SK-N-SH (cell line): ENCODE measurements at regions of chr7 and their contacts with region 1.

Region 1: DNA sequence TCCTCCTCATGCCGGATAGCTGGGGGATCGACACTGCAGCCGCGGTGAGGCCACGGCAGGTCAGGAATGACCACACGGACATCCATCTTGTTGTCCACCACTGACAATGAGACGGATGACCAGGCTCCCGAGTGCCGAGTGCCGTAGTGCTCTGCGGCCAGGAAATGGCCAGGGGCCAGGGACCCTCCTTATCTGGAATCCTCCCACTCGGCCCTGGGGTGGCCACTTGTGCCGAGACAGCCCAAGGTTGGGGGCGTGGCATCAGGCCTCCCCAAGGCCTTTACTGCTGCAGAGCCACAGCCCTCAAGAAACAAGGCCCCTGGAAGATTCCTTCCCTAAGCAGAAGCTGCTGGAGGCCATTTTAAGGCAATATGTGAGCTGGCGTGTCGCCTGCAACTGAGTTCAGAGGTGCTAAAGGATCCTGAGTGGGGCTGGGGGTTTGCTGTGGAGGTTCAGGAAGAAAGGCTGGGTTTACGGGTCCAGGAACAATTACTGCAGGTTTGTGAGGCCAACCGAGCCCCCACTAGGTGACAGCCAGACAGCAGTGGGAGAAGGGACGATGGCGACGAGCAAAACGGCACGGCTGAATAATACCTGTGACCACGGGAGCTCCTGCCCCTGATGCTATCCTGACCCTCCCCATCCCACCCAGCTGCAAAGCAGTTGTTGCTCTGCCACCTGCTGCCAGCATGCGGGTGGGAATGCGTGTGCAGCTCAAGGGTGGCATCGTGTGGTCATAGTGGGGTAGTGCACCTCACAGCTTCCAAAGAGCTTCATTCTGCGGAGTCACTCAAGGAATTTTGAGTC is 31.6 kb upstream of the LEP start:
- DNase-seq: peak; percentile 93
- H3K4me3 ChIP-seq: no peak overlapping the region
- H3K27ac ChIP-seq: no peak overlapping the region
- H3K4me1 ChIP-seq: peaks cover 0 to 3% of the 10 kb centered on the region in 2 experiments; a peak in 1 of 4 replicates
- H3K27me3 ChIP-seq: no peaks in the 10 kb centered on the region
- CTCF ChIP-seq: peak; percentile 99
- EP300 ChIP-seq: no peak
- RAD21 ChIP-seq: peak; percentile 100

Region 2: DNA sequence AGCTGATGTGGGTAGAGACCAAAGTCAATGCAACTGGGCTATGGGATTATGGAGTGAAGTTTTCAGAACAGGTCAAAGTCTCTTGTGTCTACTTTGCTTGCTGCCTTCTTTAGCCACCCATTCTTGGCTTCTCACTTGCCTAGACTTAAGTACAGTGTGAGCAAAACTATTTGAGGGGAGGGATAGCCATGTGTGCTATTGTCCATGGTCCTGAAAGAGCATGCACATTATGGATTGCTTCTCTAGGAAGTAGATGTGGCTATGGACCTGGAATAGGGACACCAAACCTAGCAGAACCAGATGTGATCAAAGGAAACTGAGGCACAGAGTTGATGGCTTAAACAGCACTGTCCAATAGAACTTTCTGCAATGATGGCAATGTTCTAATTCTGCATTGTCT is 735.0 kb before region 1 on chr7:
- CTCF ChIA-PET with region 1: no interaction called
- POLR2A ChIA-PET with region 1: no interaction called
- DNase-seq: no peak
- H3K4me3 ChIP-seq: no peak overlapping the region
- H3K27ac ChIP-seq: no peak overlapping the region
- H3K4me1 ChIP-seq: peaks cover 0 to 2% of the 10 kb centered on the region in 2 experiments; a peak in 1 of 4 replicates
- H3K27me3 ChIP-seq: no peaks in the 10 kb centered on the region
- CTCF ChIP-seq: no peak
- EP300 ChIP-seq: no peak
- RAD21 ChIP-seq: no peak

Region 3: GRCh38 chr7:127591591-127591990 is 617.8 kb before region 1 on chr7:
- CTCF ChIA-PET with region 1: interaction called, 78 read pairs
- POLR2A ChIA-PET with region 1: no interaction called
- DNase-seq: no peak
- H3K4me3 ChIP-seq: no peak overlapping the region
- H3K27ac ChIP-seq: no peak overlapping the region
- H3K4me1 ChIP-seq: peaks cover 10 to 17% of the 10 kb centered on the region in 2 experiments; a peak in 3 of 4 replicates
- H3K27me3 ChIP-seq: no peaks in the 10 kb centered on the region
- CTCF ChIP-seq: no peak
- EP300 ChIP-seq: no peak
- RAD21 ChIP-seq: no peak

Region 4: DNA sequence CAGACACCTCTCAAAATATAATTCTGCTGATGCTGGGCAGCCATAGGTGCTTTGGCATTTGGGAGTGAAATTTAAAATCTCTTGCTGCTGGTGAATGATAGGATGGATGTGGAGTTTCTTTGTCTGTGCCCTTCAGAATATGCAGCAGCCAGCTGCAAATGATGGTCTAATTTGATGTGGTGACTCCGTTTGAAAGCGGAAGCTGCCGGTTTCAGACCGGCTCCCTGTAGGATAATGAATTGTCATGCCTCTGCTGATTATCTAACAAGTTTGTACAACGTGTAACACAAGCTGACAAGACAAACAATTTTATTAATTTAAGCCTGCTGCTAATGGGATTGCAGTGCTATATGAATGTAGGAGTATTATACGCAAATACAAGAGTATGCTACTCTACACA is 453.9 kb before region 1 on chr7:
- CTCF ChIA-PET with region 1: interaction called, 17 read pairs
- POLR2A ChIA-PET with region 1: no interaction called
- DNase-seq: peak; percentile 52
- H3K4me3 ChIP-seq: no peak overlapping the region
- H3K27ac ChIP-seq: peak overlapping the region in 1 of 2 experiments; percentile 85; a peak in 2 of 4 replicates
- H3K4me1 ChIP-seq: peaks cover 7 to 25% of the 10 kb centered on the region in 2 experiments; a peak in 3 of 4 replicates
- H3K27me3 ChIP-seq: no peaks in the 10 kb centered on the region
- CTCF ChIP-seq: no peak
- EP300 ChIP-seq: peak in 1 of 2 experiments; percentile 34; a peak in 1 of 4 replicates
- RAD21 ChIP-seq: peak; percentile 12; the same call in 1 of the 2 replicates

Region 5: GRCh38 chr7:128041203-128041602 is 168.2 kb before region 1 on chr7:
- CTCF ChIA-PET with region 1: interaction called, 165 read pairs
- POLR2A ChIA-PET with region 1: interaction called, 3 read pairs
- DNase-seq: no peak
- H3K4me3 ChIP-seq: no peak overlapping the region
- H3K27ac ChIP-seq: no peak overlapping the region
- H3K4me1 ChIP-seq: peaks cover 2 to 11% of the 10 kb centered on the region in 2 experiments; a peak in 1 of 4 replicates
- H3K27me3 ChIP-seq: no peaks in the 10 kb centered on the region
- CTCF ChIP-seq: no peak
- EP300 ChIP-seq: peak in 1 of 2 experiments; percentile 48; a peak in 1 of 4 replicates
- RAD21 ChIP-seq: no peak

Region 6: GRCh38 chr7:128091106-128091505 is 118.3 kb before region 1 on chr7:
- CTCF ChIA-PET with region 1: interaction called, 37 read pairs
- POLR2A ChIA-PET with region 1: no interaction called
- DNase-seq: no peak
- H3K4me3 ChIP-seq: no peak overlapping the region
- H3K27ac ChIP-seq: no peak overlapping the region
- H3K4me1 ChIP-seq: peaks cover 0 to 26% of the 10 kb centered on the region in 2 experiments; a peak in 2 of 4 replicates
- H3K27me3 ChIP-seq: no peaks in the 10 kb centered on the region
- CTCF ChIP-seq: no peak
- EP300 ChIP-seq: no peak
- RAD21 ChIP-seq: no peak

Region 7: GRCh38 chr7:128148676-128149075 is 60.8 kb before region 1 on chr7:
- CTCF ChIA-PET with region 1: interaction called, 16 read pairs
- POLR2A ChIA-PET with region 1: no interaction called
- DNase-seq: no peak
- H3K4me3 ChIP-seq: no peak overlapping the region
- H3K27ac ChIP-seq: no peak overlapping the region
- H3K4me1 ChIP-seq: no peaks in the 10 kb centered on the region; a peak in 1 of 4 replicates
- H3K27me3 ChIP-seq: peaks cover 28% of the 10 kb centered on the region; the same call in 1 of the 2 replicates
- CTCF ChIP-seq: no peak
- EP300 ChIP-seq: no peak
- RAD21 ChIP-seq: no peak

Region 8: DNA sequence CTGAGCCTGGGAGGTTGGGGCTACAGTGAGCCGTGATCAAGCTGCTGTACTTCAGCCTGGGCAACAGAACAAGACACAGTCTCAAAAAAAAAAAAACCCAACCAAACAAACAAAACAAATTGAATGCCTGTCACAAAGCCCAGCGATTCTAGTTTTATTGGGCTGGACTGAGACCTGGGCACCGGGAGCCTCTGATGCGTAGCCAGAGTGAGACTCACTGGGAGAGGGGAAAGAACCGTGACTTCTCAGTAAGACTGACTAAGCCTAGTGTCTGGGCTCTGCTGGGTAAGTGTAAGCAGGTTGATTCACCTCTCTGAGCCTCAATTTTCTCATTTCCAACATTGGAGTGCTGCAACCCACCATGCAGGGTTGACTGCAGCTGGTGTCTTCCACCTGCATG is 21.6 kb after region 1 on chr7:
- CTCF ChIA-PET with region 1: interaction called, 13 read pairs
- POLR2A ChIA-PET with region 1: interaction called, 5 read pairs
- DNase-seq: no peak
- H3K4me3 ChIP-seq: no peak overlapping the region
- H3K27ac ChIP-seq: no peak overlapping the region
- H3K4me1 ChIP-seq: peaks cover 0 to 7% of the 10 kb centered on the region in 2 experiments; a peak in 1 of 4 replicates
- H3K27me3 ChIP-seq: peaks cover 6% of the 10 kb centered on the region; the same call in 1 of the 2 replicates
- CTCF ChIP-seq: no peak
- EP300 ChIP-seq: no peak
- RAD21 ChIP-seq: no peak

Region 9: DNA sequence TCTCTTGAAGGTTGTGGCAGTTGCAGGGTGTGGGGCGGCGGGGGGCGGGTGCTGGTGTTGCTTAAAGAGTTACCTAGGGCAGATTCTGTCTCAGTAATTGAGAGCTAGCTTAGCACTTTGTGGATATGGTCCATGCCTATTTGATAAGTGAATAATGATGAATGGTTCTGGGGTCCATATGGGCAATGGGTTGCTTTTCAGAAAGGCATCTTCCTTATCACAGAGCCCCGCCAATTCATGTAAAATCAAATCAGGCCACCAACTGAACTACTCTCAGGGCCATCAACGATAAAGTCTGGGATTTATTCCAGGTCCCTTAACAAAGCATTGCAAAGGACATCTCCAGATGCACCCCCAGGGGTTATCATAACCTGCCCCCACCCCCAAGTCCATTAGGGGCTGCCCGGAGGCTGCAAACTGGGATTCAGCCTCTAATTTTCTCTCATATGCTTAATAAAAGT is 153.9 kb after region 1 on chr7:
- CTCF ChIA-PET with region 1: no interaction called
- POLR2A ChIA-PET with region 1: no interaction called
- DNase-seq: peak; percentile 84
- H3K4me3 ChIP-seq: no peak overlapping the region
- H3K27ac ChIP-seq: peak overlapping the region in 1 of 2 experiments; percentile 100; a peak in 2 of 4 replicates
- H3K4me1 ChIP-seq: peaks cover 0 to 54% of the 10 kb centered on the region in 2 experiments; a peak in 2 of 4 replicates
- H3K27me3 ChIP-seq: peaks cover 46% of the 10 kb centered on the region
- CTCF ChIP-seq: no peak
- EP300 ChIP-seq: peak; percentile 22 to 96; a peak in 3 of 4 replicates
- RAD21 ChIP-seq: no peak; the same call in 1 of the 2 replicates